CD8-positive, alpha-beta T cell (primary cell): ENCODE measurements at regions of chr1 and their contacts with region 1.

Region 1: DNA sequence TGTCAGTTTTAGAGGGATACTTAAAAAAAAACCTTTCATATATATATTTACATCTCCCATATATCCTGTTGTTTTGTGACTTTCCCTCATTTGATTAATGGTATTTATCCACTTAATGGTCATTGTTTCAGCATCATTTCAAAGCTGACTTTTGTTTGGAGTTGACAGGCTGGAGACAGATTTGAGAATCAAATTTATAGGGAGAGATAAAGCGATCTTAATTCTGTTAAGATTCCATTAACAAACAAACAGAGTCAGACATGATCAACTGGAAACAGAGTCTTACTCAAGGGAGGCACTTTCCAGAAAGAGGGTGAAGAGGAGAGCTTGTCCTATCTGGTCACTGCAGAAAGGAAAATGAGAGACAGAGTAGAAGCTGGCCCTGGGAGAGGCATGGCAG is 283.4 kb downstream of the TTLL7 start:
- DNase-seq: no peak
- ATAC-seq: no peak
- H3K4me3 ChIP-seq: no peak overlapping the region
- H3K4me3 Mint-ChIP-seq: no peak overlapping the region
- H3K27ac ChIP-seq: no peak overlapping the region
- H3K27ac Mint-ChIP-seq: no peak overlapping the region
- H3K4me1 ChIP-seq: no peaks in the 10 kb centered on the region
- H3K4me1 Mint-ChIP-seq: peaks cover 6% of the 10 kb centered on the region
- H3K27me3 ChIP-seq: no peaks in the 10 kb centered on the region
- H3K27me3 Mint-ChIP-seq: no peaks in the 10 kb centered on the region
- CTCF ChIP-seq: no peak

Region 2: DNA sequence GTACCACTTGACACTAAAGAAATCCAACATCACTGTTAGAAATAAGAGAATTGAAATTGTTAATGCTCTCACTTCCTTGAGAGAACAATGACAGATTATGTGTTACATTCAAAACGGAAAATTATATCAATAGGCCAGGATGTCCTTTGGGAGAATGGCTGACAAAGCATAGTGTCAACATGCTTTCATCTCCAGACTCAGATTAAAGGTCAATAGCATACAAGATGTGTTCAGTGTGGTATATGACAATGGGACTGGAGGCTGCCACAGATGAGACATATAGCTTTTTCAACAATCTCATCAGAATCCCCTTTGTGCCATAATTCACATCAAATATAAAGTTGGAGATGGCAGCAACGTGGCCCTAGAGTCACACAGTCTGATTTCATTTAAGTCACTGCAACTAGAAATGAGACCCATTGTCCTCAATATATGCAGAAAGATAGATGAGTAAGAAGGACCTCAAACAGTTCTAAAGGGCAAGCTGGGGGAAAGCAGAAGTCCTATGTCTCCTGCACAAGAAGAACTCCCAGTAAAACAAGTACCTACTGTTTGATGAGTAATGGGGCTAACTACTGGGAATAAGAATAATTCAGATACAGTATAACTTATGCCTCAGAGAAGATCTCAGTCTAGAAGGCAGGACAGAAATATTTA is 44.5 kb before region 1 on chr1:
- CTCF ChIA-PET with region 1: no interaction called
- POLR2A ChIA-PET with region 1: no interaction called
- intact Hi-C with region 1: no loop called
- DNase-seq: no peak
- ATAC-seq: no peak
- H3K4me3 ChIP-seq: no peak overlapping the region
- H3K4me3 Mint-ChIP-seq: no peak overlapping the region
- H3K27ac ChIP-seq: no peak overlapping the region
- H3K27ac Mint-ChIP-seq: no peak overlapping the region
- H3K4me1 ChIP-seq: no peaks in the 10 kb centered on the region
- H3K4me1 Mint-ChIP-seq: no peaks in the 10 kb centered on the region
- H3K27me3 ChIP-seq: no peaks in the 10 kb centered on the region
- H3K27me3 Mint-ChIP-seq: no peaks in the 10 kb centered on the region
- CTCF ChIP-seq: no peak

Region 3: DNA sequence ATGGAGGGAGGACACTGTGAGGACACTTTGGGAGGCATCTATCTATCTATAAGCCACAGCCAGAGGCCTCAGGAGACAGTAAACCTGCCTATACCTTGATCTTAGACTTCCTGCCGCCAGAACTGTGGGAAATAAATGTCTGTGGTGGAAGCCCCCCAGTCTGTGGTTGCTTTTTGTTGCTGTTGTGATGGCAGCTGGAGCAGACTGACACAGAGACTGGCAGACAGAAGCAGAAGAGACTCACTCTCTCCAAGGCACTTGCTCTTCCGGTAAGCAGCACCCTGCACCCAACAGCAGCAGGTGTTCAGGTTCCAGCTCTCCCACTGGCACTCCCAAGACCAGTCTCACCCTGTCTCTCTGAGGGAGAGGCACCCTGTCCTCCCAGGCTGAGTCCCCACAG is 14.2 kb before region 1 on chr1:
- CTCF ChIA-PET with region 1: no interaction called
- POLR2A ChIA-PET with region 1: interaction called, 4 read pairs
- intact Hi-C with region 1: loop called in 1 of 2 experiments (anchors 2 kb)
- DNase-seq: peak in 6 of 9 experiments; percentile 7 to 70 (median 38)
- ATAC-seq: peak; percentile 89
- H3K4me3 ChIP-seq: no peak overlapping the region
- H3K4me3 Mint-ChIP-seq: peak overlapping the region; percentile 46
- H3K27ac ChIP-seq: no peak overlapping the region
- H3K27ac Mint-ChIP-seq: peak overlapping the region; percentile 91
- H3K4me1 ChIP-seq: peaks cover 22% of the 10 kb centered on the region
- H3K4me1 Mint-ChIP-seq: peaks cover 28% of the 10 kb centered on the region
- H3K27me3 ChIP-seq: no peaks in the 10 kb centered on the region
- H3K27me3 Mint-ChIP-seq: no peaks in the 10 kb centered on the region
- CTCF ChIP-seq: no peak

Region 4: GRCh38 chr1:84620720-84621313 is 905.3 kb after region 1 on chr1:
- CTCF ChIA-PET with region 1: no interaction called
- POLR2A ChIA-PET with region 1: no interaction called
- intact Hi-C with region 1: no loop called
- DNase-seq: peak; percentile 63 to 91 (median 77)
- ATAC-seq: peak; percentile 91
- H3K4me3 ChIP-seq: peak overlapping the region; percentile 62 to 93
- H3K4me3 Mint-ChIP-seq: peak overlapping the region; percentile 91
- H3K27ac ChIP-seq: peak overlapping the region in 1 of 2 experiments; percentile 35
- H3K27ac Mint-ChIP-seq: peak overlapping the region; percentile 14
- H3K4me1 ChIP-seq: peaks cover 4% of the 10 kb centered on the region
- H3K4me1 Mint-ChIP-seq: peaks cover 2% of the 10 kb centered on the region
- H3K27me3 ChIP-seq: no peaks in the 10 kb centered on the region
- H3K27me3 Mint-ChIP-seq: peaks cover 5% of the 10 kb centered on the region
- CTCF ChIP-seq: peak; percentile 100